Activated CD4-positive, alpha-beta memory T cell treated with anti-CD3 and anti-CD28 coated beads for 36 hours (primary cell): ENCODE measurements at regions of chr3 and their contacts with region 1.

Region 1: DNA sequence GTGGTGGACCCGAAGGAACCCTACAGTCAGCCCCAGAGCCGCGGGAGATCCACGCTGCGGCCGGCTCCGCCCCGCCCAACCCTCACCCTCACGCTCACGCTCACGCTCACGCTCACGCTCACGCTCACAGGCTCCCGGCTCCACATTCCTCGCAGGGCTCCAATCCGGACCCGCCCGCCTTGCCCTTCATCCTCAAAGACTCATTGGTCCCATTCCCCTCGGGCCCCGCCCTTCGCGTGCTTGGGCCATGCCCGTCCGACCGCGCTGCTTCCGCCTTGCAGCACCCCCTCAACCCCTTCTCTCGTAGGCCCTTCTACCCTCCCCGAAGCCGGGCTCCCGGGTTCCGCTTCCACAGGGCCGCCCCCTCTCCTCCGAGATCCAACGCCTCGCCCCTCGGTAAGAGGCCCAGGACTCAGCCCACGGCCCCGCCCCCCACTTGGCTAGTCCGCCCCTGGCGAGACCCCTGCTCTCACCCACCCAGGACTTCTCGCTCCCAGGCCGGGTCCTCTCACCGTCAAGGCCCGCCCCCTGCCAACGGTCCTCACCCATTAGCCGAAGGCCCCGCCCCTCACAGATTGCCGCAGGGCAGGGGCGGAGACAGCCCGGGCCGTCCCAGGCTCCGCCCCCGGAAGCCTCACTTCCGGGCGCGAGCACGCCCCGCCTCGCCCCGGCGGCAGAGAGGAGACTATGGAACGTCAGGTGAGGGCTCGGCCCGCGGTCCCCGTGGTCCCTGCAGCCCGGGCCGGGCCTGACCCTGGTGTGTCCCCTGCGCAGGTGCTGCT is at the start of gene APEH:
- DNase-seq: peak; percentile 99
- H3K4me3 Mint-ChIP-seq: peak within 1 kb of the TSS; percentile 93
- H3K27ac Mint-ChIP-seq: peak within 1 kb of the TSS; percentile 97
- H3K4me1 Mint-ChIP-seq: peaks cover 32% of the 10 kb centered on the region
- H3K27me3 Mint-ChIP-seq: no peaks in the 10 kb centered on the region
- total RNA-seq, gene APEH: 141 to 143 TPM

Region 2: DNA sequence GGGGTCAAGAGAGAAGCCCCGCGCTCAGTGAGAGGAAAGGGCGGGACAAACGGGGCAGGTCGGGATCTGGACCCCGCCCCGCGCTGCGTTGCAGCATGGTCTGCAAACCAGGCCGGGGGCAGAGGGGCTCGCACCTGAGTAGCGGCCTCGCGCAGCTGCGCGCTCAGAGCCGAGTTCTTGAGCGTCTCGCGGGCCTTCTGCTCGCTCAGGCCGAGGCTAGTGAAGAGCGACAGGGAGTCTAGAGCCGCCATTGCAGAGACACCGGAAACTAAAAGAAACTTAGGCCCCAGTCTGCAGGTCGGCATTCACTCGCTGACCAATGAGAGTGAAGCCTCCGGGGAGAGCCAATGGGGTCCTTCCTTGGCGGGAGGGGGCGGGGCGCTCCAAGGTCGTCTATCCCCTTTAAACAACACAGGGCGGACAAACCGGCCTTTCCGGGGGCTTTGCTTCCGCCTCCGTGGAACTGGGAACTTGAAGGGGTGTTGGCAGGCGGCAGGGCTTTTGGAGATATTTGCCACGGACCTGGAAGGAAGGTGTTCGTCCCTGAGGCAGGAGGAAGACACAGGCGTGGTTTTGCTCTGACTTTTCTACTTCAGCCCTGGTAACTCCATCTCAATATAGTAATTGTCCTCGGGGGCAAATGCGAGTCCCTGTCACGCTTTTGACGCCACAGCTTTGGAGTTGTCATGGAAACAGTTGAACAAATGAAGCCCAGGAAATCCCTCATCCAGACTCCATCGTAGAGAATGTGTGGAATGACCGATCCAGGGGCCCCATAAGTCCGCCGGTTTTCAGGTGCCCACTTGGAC is 569.2 kb before region 1 on chr3 and contains the start of gene QARS1:
- CTCF ChIA-PET with region 1: no interaction called
- POLR2A ChIA-PET with region 1: no interaction called
- intact Hi-C with region 1: loop called (anchors 5 kb)
- DNase-seq: peak; percentile 94
- H3K4me3 Mint-ChIP-seq: peak within 1 kb of the TSS; percentile 99
- H3K27ac Mint-ChIP-seq: peak within 1 kb of the TSS; percentile 87
- H3K4me1 Mint-ChIP-seq: peaks cover 22% of the 10 kb centered on the region
- H3K27me3 Mint-ChIP-seq: no peaks in the 10 kb centered on the region
- total RNA-seq, gene QARS1: 249 to 286 TPM

Region 3: DNA sequence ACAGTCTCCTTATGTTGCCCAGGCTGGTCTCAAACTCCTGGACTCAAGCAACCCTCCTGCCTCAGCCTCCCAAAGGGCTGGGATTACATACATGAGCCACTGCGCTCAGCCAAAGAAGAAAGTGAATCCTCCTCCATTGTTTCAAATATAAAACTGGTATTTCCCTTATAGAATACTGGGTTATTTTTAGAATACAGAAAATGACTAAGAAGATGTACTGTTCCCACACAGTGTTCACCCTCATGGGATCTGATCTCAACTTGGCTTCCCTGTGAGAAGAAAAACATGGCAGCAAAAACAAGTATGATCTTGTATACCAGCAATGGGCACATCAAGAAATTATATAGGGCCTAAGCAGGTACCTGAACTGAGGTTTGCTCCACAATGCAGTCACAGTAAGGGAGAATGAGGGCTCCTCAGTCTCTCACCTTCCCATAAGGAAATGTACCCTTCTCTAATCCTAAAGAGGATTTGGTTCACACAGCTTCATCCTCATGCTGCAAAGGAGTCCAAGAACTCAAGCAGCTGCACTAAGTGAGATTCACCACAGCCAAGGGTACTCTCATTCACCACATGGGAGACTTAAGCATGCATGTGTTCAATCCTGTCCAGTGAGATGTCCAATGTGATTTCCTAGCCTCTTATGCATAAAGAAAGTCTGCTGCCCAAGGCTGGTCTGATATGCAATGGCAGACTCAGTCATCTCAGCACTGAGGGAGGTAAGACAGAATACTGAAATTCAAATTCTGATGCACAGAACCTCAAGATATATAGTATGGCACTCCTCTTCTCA is 359.8 kb before region 1 on chr3:
- CTCF ChIA-PET with region 1: no interaction called
- POLR2A ChIA-PET with region 1: no interaction called
- intact Hi-C with region 1: no loop called
- DNase-seq: no peak
- H3K4me3 Mint-ChIP-seq: no peak overlapping the region
- H3K27ac Mint-ChIP-seq: peak overlapping the region; percentile 28
- H3K4me1 Mint-ChIP-seq: peaks cover 8% of the 10 kb centered on the region
- H3K27me3 Mint-ChIP-seq: no peaks in the 10 kb centered on the region

Region 4: DNA sequence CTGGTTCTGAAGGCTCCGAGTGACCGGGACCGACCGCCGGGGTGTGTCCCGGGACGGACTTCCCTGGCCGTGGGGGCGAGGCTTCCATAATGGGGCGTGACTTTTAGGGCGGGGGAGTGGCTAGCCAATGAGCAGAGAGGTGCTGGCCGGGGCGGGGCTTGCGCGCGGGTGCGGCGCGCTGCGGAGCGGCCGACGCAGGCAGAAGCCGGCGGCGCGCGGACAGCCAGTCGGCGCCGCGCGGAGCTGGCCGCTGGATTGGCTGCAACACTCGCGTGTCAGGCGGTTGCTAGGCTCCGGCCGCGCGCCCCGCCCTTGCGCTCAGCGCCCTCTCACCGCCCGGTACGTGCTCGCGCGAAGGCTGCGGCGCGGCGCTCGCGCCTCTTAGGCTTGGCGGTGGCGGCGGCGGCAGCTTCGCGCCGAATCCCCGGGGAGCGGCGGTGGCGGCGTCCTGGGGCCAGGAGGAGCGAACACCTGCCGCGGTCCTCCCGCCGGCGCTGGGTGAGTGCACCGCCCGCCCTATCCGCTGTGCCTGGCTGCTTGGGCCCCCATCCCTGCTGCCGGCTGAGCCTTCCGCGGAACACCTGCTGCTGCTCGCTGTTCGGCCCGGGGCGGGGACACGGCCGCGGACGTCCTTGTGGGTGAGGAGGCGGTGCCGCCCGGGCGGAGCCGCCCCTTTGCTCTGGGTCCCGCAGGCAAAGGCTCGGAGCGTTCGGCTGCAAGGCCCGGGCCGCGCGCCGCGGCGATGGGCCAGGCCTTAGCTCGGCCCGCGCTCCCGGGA is 203.8 kb before region 1 on chr3 and contains the start of gene DAG1:
- CTCF ChIA-PET with region 1: interaction called, 3 read pairs
- POLR2A ChIA-PET with region 1: no interaction called
- intact Hi-C with region 1: loop called (anchors 2 kb)
- DNase-seq: peak; percentile 97
- H3K4me3 Mint-ChIP-seq: peak within 1 kb of the TSS; percentile 91
- H3K27ac Mint-ChIP-seq: peak within 1 kb of the TSS; percentile 87
- H3K4me1 Mint-ChIP-seq: peaks cover 21% of the 10 kb centered on the region
- H3K27me3 Mint-ChIP-seq: no peaks in the 10 kb centered on the region
- total RNA-seq, gene DAG1: 9.4 to 9.6 TPM

Region 5: DNA sequence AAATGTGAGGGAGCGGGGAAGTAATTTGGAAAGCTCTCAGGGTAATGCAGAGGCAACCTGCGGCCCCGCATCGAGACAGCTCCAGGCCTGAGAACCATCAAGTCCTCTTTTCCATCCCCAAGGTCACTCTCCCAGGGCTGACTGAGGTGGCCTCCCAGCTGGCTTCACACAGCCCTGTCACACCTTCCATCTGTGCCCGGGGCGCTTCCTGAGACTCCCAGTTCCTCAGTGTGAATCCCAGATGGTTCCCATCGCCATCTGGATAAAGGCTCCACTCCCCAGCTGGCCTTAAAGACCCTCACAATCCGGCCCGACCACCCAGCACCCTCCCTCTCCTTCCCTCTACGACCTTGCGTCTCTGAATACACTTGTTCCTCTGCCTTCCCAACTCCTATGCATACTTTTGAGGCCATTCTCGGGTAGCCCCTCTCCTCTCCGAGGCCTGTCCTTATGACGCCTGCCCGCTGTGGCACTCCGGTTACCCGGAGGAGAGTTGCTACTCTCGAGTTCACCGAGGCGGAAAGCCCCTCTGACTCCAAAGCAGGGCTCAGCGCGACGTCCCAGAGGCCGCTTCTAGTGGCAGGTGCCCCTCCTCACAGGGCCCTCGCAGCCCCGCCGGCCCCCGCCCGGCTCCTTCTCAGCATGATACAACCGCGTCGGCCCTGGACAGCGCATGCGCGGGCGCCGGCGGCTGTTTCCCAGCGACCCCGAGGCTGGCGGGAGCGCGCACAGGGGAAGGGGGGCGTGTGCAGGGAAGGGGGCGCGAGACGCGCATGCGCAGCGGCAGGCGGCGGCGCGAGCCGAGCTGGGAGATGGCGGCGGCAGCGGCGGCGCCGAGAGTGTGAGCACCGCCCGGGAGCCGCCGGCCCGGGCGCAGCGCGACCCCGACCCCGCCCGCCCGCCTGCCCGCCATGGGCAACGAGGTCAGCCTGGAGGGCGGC is 119.9 kb before region 1 on chr3 and contains the start of gene BSN:
- CTCF ChIA-PET with region 1: interaction called, 16 read pairs
- POLR2A ChIA-PET with region 1: no interaction called
- intact Hi-C with region 1: no loop called
- DNase-seq: peak; percentile 92
- H3K4me3 Mint-ChIP-seq: peak within 1 kb of the TSS; percentile 79
- H3K27ac Mint-ChIP-seq: no peak within 1 kb of the TSS
- H3K4me1 Mint-ChIP-seq: peaks cover 21% of the 10 kb centered on the region
- H3K27me3 Mint-ChIP-seq: peaks cover 48% of the 10 kb centered on the region
- total RNA-seq, gene BSN: 0.05 to 0.07 TPM

Region 6: DNA sequence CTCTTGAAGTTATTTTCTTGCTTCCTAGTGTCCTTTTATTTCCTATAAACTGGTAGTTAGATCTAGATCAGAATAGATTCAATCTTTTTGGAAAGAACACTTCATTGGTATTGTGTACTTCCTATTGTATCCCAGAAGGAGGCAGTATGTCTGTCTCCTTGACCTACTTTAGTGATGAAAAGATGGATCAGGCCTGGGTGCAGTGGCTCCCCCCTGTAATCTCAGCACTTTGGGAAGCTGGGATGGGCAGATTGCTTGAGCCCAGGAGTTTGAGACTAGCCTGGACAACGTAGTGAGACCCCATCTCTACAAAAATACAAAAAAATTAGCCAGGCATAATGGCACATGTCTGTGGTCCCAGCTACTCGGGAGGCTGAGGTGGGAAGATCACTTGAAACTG is 107.6 kb before region 1 on chr3:
- CTCF ChIA-PET with region 1: interaction called, 6 read pairs
- POLR2A ChIA-PET with region 1: interaction called, 5 read pairs
- intact Hi-C with region 1: loop called (anchors 1 kb)
- DNase-seq: no peak
- H3K4me3 Mint-ChIP-seq: no peak overlapping the region
- H3K27ac Mint-ChIP-seq: no peak overlapping the region
- H3K4me1 Mint-ChIP-seq: no peaks in the 10 kb centered on the region
- H3K27me3 Mint-ChIP-seq: peaks cover 9% of the 10 kb centered on the region

Region 7: DNA sequence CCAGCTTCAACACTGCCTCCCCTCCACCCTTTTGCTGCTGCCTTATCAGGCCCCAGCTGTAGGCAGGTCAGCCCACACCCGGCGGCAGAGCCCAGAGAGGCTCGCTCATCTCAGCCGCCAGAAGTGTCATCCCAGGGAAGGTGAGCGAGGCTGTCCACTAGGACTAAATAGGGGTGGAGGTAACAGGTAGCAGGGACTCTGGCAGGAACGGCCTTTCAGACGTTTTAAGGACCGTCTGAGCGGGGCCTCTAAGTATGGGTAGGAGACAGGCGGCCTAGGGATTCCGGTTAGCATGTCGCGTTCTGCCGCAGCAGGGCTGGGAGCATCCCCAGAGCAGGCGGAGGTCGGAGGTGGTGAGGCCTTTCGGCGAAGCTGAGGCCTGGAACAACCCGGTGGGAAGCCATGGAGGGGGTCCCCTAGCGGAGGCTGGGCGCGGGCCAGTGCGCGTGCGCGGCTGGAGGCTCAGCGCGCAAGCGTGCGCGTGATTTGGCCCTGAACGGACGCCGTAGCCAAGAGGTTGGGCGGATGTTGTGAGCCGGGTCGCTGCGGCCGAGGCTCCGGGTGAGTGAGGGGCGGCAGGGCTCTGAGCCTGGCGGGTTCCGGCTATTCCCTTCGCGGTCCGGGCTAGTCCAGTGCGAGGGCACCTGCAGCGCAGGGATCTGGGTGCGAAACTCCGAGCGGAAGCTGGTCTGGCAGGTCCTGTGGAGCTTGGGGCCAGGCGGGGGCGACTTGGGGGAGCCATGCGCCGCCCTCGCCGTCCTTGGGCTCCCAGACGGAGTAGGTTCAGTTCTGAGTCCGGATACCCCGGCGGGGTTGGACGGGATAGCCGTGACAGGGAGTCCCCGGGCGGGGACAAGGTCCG is 15.4 kb after region 1 on chr3 and contains the starts of genes MST1 and RNF123:
- CTCF ChIA-PET with region 1: no interaction called
- POLR2A ChIA-PET with region 1: no interaction called
- intact Hi-C with region 1: loop called (anchors 1 kb)
- DNase-seq: peak; percentile 95
- H3K4me3 Mint-ChIP-seq: peak within 1 kb of the TSS; percentile 98
- H3K27ac Mint-ChIP-seq: peak within 1 kb of the TSS; percentile 85
- H3K4me1 Mint-ChIP-seq: peaks cover 32% of the 10 kb centered on the region
- H3K27me3 Mint-ChIP-seq: peaks cover 1% of the 10 kb centered on the region
- total RNA-seq, gene MST1: 8.1 to 8.2 TPM
- total RNA-seq, gene RNF123: 21.0 to 29.7 TPM

Region 8: DNA sequence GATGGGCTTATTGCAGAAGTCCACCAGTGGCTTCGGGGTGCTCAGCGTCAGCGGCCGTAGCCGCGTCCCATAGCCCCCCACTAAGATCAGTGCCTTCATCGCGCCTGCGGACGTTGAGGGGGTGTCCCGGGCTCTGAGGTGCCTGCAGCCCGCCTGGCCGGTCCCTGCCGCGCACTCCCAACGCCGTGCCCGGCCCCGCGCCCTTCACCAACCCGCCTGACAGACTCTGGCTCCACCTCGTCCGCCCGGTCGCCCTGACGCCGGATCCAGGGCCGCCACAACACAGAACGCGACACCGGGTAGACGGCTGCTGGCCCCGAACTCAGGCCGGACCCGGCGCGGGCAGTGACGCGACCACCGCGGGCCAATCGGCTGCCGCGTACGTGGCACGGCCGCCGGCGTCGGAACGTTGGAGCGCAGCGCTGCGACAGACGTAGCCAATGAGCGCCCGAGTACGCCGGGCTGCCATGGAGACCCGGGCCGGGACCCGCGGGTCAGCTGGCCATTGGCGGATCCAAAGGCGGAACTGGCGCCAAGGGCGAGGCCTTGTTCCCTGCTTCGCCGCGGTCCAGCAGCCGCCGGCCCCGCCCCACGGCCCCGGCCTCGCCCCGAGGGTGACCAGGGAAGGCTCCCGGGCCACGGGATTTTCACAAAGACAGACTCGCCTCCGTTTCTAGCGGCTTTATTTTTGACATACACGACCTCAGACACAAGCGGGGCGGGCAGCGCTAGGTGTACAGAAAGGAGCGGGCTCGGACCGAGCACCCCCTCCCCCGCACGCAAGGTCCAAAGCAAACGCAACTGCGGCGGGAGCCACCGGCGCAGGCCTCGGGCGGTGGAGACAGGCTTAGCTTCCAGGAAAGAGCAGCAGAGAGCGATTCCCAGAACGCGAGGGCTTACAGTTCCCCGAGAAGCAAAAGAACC is 50.0 kb after region 1 on chr3 and contains the start of gene GMPPB:
- CTCF ChIA-PET with region 1: no interaction called
- POLR2A ChIA-PET with region 1: no interaction called
- intact Hi-C with region 1: loop called (anchors 2 kb)
- DNase-seq: peak; percentile 97
- H3K4me3 Mint-ChIP-seq: peak within 1 kb of the TSS; percentile 96
- H3K27ac Mint-ChIP-seq: peak within 1 kb of the TSS; percentile 98
- H3K4me1 Mint-ChIP-seq: peaks cover 29% of the 10 kb centered on the region
- H3K27me3 Mint-ChIP-seq: no peaks in the 10 kb centered on the region
- total RNA-seq, gene GMPPB: 41.0 to 45.4 TPM